Panc1 (cell line): ENCODE measurements at regions of chr22 and their contacts with region 1.

Region 1: DNA sequence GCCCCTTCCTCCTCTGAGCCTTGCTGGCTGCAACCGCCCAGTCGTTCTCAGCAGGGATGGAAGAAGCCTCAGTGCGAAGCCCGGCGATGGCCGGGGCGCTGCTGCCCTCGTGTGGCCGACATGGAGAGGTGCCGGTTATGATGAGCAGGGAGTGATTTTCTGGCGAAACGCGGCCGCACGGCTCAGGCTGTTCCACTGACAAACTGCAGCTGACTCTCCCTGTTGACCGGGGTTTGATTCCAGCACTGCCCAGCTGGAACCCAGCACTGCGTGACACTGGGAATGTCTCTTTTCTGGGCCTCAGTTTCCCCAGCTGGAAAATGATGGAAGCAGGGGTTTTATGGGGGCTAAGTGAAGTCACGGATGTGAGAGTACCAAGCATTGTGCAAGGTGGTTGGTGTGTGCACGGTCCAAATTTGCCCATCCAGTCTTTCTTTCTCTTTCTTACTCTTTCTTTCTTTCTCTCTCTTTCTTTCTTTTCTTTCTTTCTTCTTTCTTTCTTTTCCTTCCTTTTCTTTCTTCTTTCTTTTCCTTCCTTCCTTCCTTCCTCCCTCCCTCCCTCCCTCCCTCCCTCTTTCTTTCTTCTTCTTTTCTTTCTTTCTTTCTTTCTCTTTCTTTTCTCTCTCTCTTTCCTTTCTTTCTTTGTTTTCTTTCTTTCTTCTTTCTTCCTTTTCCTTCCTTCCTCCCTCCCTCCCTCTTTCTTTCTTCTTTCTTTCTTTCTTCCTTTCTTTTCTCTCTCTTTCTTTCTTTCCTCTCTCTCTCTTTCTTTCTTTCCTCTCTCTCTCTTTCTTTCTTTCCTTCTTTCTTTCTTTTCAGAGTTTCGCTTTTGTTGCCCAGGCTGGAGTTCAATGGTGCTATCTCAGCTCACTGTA is 25.8 kb upstream of the MPPED1 start:
- DNase-seq: peak; percentile 45
- ATAC-seq: peak; percentile 96
- H3K4me3 ChIP-seq: no peak overlapping the region
- H3K27ac ChIP-seq: no peak overlapping the region
- H3K4me1 ChIP-seq: no peaks in the 10 kb centered on the region
- H3K27me3 ChIP-seq: peaks cover 2% of the 10 kb centered on the region; the same call in 1 of the 2 replicates
- CTCF ChIP-seq: peak; percentile 88

Region 2: DNA sequence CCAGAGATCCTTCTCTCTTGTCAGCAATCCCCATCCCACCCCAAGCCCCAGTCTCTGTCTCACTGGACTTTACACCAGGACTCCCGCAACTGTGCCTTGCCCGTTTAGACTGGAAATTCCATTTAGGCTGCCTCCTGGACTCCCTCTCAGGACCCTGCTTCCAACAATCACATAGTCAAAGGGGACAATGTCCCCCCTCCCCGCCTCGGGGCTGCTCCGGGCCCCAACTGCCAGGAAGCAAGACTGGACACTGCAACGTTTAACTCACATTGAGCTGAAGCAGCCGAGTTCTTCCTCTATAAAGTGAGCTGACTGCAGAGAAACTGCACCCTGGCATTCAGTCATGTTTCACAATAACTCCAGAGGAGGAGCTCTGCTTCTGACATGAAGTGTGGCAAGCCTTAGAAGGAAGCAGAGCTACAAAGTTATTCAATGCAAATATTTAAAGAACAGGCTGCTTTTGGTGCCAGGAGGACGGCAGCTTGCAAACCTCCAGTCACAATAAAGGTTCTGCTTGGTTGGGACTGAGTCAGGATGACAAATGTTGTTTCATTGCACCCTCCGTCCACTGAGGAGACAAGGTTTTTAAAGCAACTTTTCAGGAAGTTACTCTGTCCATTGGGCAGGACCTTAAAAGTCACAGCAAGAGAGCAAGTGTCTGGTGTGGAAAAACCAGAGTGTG is 391.0 kb before region 1 on chr22:
- CTCF ChIA-PET with region 1: no interaction called
- POLR2A ChIA-PET with region 1: no interaction called
- in situ Hi-C with region 1: no loop called
- intact Hi-C with region 1: no loop called
- DNase-seq: peak; percentile 78
- ATAC-seq: peak; percentile 77
- H3K4me3 ChIP-seq: peak overlapping the region in 1 of 2 experiments; percentile 16; a peak in 2 of 4 replicates
- H3K27ac ChIP-seq: peak overlapping the region; percentile 54; the same call in 1 of the 2 replicates
- H3K4me1 ChIP-seq: peaks cover 25% of the 10 kb centered on the region
- H3K27me3 ChIP-seq: no peaks in the 10 kb centered on the region
- CTCF ChIP-seq: no peak

Region 3: DNA sequence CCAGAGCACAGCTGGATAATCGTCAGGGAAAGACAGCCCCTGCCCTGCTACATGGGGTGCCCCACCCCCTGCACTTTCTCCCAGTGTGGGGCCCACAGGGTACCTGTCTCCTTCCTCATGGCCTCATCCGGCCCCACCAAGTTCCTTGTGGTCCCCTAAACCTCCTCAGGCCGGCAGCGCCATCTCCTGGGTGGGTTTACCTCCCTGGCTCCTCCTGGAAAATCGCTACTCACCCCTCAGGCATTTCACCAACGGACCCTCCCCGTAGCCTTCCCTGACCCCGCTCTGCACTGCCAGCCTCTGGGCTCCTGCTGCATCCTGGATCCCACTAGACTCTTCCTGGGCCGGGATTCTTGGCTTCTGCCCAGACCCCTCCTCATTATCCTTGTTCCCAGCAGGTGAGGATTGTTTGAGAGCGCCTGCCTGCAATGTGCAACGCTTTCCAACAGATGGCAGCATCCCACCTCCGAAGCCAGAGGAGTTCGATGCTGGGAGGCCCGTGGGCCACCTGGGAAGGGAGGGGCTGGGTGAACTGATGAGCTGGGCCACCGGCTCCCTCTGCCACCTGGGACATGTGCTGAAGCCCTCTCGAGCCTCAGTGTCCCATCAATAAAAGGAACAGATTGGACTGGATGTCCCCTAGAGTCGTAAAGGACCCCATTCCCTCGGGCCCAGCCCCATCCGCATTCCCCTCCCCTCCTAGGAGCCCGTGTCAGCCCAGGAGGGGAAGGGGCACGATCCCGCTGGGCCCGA is 154.9 kb before region 1 on chr22:
- CTCF ChIA-PET with region 1: no interaction called
- POLR2A ChIA-PET with region 1: no interaction called
- in situ Hi-C with region 1: no loop called
- intact Hi-C with region 1: loop called (anchors 1 kb)
- DNase-seq: peak; percentile 47
- ATAC-seq: peak; percentile 73
- H3K4me3 ChIP-seq: no peak overlapping the region
- H3K27ac ChIP-seq: no peak overlapping the region
- H3K4me1 ChIP-seq: no peaks in the 10 kb centered on the region
- H3K27me3 ChIP-seq: no peaks in the 10 kb centered on the region
- CTCF ChIP-seq: peak; percentile 90

Region 4: GRCh38 chr22:43273902-43274484 is 112.0 kb before region 1 on chr22:
- CTCF ChIA-PET with region 1: interaction called, 4 read pairs
- POLR2A ChIA-PET with region 1: no interaction called
- in situ Hi-C with region 1: no loop called
- intact Hi-C with region 1: loop called (anchors 5 kb)
- DNase-seq: no peak
- ATAC-seq: peak; percentile 82
- H3K4me3 ChIP-seq: no peak overlapping the region
- H3K27ac ChIP-seq: no peak overlapping the region
- H3K4me1 ChIP-seq: no peaks in the 10 kb centered on the region
- H3K27me3 ChIP-seq: no peaks in the 10 kb centered on the region
- CTCF ChIP-seq: peak; percentile 75